ENCODE measurements at regions of chr12 and their contacts with region 1.

Region 1: DNA sequence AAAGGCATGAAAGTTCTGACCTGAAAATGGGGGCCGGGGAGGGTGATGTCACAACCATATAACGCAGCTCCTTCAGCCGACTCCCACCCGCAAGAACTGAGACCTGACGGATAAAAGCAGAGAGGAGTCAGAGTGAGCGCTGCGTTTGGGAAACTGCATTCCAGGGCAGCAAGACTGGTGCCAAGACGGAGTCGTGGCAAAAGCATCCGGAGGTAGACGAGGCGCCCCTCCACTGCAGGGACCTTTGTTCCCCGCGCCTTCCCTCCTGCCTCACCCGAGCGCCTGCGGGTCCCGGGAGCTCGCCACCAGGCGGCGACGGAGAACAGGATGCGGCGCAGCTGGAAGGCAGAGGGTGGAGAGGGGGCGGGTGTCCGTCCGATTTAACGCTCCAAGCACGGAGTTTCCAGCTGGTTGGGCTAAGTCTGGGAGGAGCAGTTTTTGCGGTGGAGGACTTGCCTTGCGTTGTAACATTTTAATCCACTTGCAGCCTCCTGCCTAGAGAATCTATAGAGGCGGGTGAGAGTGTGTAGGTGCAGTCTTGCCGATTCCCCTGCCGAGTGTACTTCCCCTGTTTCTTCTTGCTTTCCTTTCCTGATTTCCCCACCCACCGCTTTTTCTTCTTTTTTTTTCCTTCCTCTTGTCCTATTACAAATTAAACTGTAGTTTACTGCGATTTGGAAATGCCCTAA is 1.2 kb upstream of the CPNE8 start:
- DNase-seq: peak; percentile 91
- H3K4me3 ChIP-seq: peak overlapping the region; percentile 54 to 67
- H3K27ac ChIP-seq: peak overlapping the region in 1 of 2 experiments; percentile 67; a peak in 1 of 4 replicates
- H3K4me1 ChIP-seq: peaks cover 0 to 7% of the 10 kb centered on the region in 2 experiments; a peak in 1 of 4 replicates
- H3K27me3 ChIP-seq: no peaks in the 10 kb centered on the region; the same call in 1 of the 2 replicates
- CTCF ChIP-seq: peak; percentile 81
- EP300 ChIP-seq: 0 out of 4 replicates have a peak, but pooled peaks of 1 of the 2 experiments have one; percentile 4
- RAD21 ChIP-seq: peak; percentile 78

Region 2: GRCh38 chr12:38664661-38665269 is 241.9 kb before region 1 on chr12:
- CTCF ChIA-PET with region 1: interaction called, 12 read pairs
- POLR2A ChIA-PET with region 1: interaction called, 4 read pairs
- DNase-seq: peak; percentile 26
- H3K4me3 ChIP-seq: peak overlapping the region in 1 of 2 experiments; percentile 35; a peak in 1 of 4 replicates
- H3K27ac ChIP-seq: peak overlapping the region in 1 of 2 experiments; percentile 64; a peak in 2 of 4 replicates
- H3K4me1 ChIP-seq: no peaks in the 10 kb centered on the region; a peak in 2 of 4 replicates
- H3K27me3 ChIP-seq: no peaks in the 10 kb centered on the region
- CTCF ChIP-seq: peak; percentile 55
- EP300 ChIP-seq: no peak
- RAD21 ChIP-seq: peak; percentile 60

Region 3: GRCh38 chr12:38850476-38850875 is 56.1 kb before region 1 on chr12:
- CTCF ChIA-PET with region 1: no interaction called
- POLR2A ChIA-PET with region 1: no interaction called
- DNase-seq: no peak
- H3K4me3 ChIP-seq: no peak overlapping the region
- H3K27ac ChIP-seq: no peak overlapping the region
- H3K4me1 ChIP-seq: no peaks in the 10 kb centered on the region
- H3K27me3 ChIP-seq: no peaks in the 10 kb centered on the region
- CTCF ChIP-seq: no peak
- EP300 ChIP-seq: no peak
- RAD21 ChIP-seq: no peak

Region 4: DNA sequence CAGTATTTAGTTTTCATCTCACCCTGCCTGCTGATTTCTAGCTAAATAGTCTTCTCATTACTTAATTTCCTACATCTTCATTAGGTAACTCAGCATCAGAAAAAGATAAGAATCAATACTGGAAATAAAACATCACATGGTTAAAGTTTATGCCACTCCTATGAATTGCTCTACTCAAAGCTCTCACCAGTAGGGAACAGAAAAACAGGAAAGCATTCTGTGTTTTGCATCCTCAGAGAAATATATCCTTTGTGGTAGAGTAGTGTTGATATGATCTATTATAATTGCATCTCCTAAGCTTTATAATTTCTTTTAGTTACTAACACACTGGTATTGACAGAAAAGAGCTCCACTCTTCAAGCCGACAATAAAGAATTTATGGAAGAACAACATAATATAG is 11.2 kb before region 1 on chr12:
- CTCF ChIA-PET with region 1: interaction called, 24 read pairs
- POLR2A ChIA-PET with region 1: no interaction called
- DNase-seq: no peak
- H3K4me3 ChIP-seq: no peak overlapping the region
- H3K27ac ChIP-seq: no peak overlapping the region; a peak in 1 of 4 replicates
- H3K4me1 ChIP-seq: no peaks in the 10 kb centered on the region
- H3K27me3 ChIP-seq: no peaks in the 10 kb centered on the region
- CTCF ChIP-seq: no peak
- EP300 ChIP-seq: no peak
- RAD21 ChIP-seq: no peak

Region 5: GRCh38 chr12:38921025-38921677 is 14.5 kb after region 1 on chr12:
- CTCF ChIA-PET with region 1: interaction called, 17 read pairs
- POLR2A ChIA-PET with region 1: no interaction called
- DNase-seq: peak; percentile 25
- H3K4me3 ChIP-seq: no peak overlapping the region
- H3K27ac ChIP-seq: no peak overlapping the region
- H3K4me1 ChIP-seq: peaks cover 0 to 2% of the 10 kb centered on the region in 2 experiments; a peak in 1 of 4 replicates
- H3K27me3 ChIP-seq: no peaks in the 10 kb centered on the region
- CTCF ChIP-seq: peak; percentile 65
- EP300 ChIP-seq: no peak
- RAD21 ChIP-seq: peak; percentile 78

Region 6: GRCh38 chr12:39037115-39037514 is 130.5 kb after region 1 on chr12:
- CTCF ChIA-PET with region 1: interaction called, 14 read pairs
- POLR2A ChIA-PET with region 1: interaction called, 9 read pairs
- DNase-seq: no peak
- H3K4me3 ChIP-seq: no peak overlapping the region
- H3K27ac ChIP-seq: no peak overlapping the region
- H3K4me1 ChIP-seq: no peaks in the 10 kb centered on the region; a peak in 1 of 4 replicates
- H3K27me3 ChIP-seq: no peaks in the 10 kb centered on the region
- CTCF ChIP-seq: no peak
- EP300 ChIP-seq: no peak
- RAD21 ChIP-seq: no peak

Region 7: DNA sequence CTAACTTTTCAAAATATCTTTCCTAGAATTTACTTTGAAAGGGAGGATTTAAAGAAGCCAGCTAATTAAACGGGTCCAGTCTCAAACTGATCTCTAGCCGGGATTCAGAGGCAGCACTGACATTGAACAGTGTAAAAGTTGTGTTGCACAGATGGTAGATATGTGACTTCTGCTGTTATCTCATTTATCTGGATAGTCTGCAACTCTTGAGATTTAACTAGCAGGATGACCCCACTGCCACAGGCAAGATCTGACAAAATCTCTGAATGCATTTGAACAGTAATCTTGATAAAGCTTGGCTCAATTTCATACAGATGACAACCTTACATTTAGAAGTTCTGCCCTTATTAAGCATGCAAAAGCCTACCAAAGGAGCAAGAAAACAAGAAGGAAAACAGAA is 136.8 kb after region 1 on chr12:
- CTCF ChIA-PET with region 1: interaction called, 14 read pairs
- POLR2A ChIA-PET with region 1: interaction called, 9 read pairs
- DNase-seq: peak; percentile 48
- H3K4me3 ChIP-seq: no peak overlapping the region
- H3K27ac ChIP-seq: peak overlapping the region in 1 of 2 experiments; percentile 91; a peak in 2 of 4 replicates
- H3K4me1 ChIP-seq: peaks cover 0 to 15% of the 10 kb centered on the region in 2 experiments; a peak in 3 of 4 replicates
- H3K27me3 ChIP-seq: no peaks in the 10 kb centered on the region
- CTCF ChIP-seq: no peak
- EP300 ChIP-seq: peak in 1 of 2 experiments; percentile 97; a peak in 2 of 4 replicates
- RAD21 ChIP-seq: no peak

Region 8: GRCh38 chr12:39081910-39082309 is 175.3 kb after region 1 on chr12:
- CTCF ChIA-PET with region 1: no interaction called
- POLR2A ChIA-PET with region 1: no interaction called
- DNase-seq: no peak
- H3K4me3 ChIP-seq: no peak overlapping the region
- H3K27ac ChIP-seq: no peak overlapping the region
- H3K4me1 ChIP-seq: peaks cover 0 to 4% of the 10 kb centered on the region in 2 experiments; a peak in 2 of 4 replicates
- H3K27me3 ChIP-seq: no peaks in the 10 kb centered on the region
- CTCF ChIP-seq: no peak
- EP300 ChIP-seq: no peak
- RAD21 ChIP-seq: no peak

Region 9: GRCh38 chr12:39103552-39104165 is 197.0 kb after region 1 on chr12:
- CTCF ChIA-PET with region 1: interaction called, 76 read pairs
- POLR2A ChIA-PET with region 1: interaction called, 3 read pairs
- DNase-seq: peak; percentile 67
- H3K4me3 ChIP-seq: no peak overlapping the region; a peak in 1 of 4 replicates
- H3K27ac ChIP-seq: no peak overlapping the region; a peak in 1 of 4 replicates
- H3K4me1 ChIP-seq: no peaks in the 10 kb centered on the region
- H3K27me3 ChIP-seq: no peaks in the 10 kb centered on the region
- CTCF ChIP-seq: peak; percentile 81
- EP300 ChIP-seq: no peak
- RAD21 ChIP-seq: peak; percentile 97